ENCODE measurements at regions of chr5 and their contacts with region 1.

Region 1: GRCh38 chr5:150441813-150442698 is 7.5 kb downstream of the RPS14 start:
- DNase-seq: no peak
- ATAC-seq: no peak
- H3K4me3 Mint-ChIP-seq: no peak overlapping the region
- H3K27ac Mint-ChIP-seq: peak overlapping the region; percentile 13
- H3K4me1 Mint-ChIP-seq: peaks cover 16% of the 10 kb centered on the region
- H3K27me3 Mint-ChIP-seq: no peaks in the 10 kb centered on the region
- CTCF ChIP-seq: no peak

Region 2: DNA sequence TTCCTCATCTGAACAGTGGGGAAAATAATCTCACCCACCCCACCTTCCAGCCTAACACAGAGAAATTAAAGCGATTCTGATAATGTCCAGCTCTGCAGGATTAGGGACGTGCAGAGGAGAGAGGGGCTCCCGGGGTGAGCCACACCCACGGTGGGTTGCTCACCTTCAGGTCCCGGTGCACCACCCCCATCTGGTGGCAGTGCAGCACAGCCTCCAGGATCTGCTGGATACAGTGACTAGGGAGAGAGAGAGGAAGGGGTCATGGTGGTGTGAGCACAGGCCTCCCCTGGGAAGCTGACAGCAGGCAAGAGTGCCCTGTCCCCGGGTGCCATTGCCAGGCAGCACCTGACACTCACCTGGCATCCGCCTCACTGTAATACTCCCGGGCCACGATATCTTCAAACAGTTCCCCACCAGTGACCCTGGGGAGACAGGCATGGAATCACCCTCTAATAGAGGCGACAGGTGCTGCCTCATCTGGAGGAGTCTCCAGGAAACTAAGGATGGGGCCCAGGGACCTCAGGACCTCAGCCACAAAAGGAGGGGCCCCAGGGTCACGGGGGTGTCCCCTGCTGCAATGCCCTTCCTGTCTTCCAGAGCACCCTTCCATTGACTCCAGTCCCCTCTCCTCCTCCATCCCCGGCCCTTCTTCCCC is 185.5 kb before region 1 on chr5:
- CTCF ChIA-PET with region 1: no interaction called
- POLR2A ChIA-PET with region 1: no interaction called
- intact Hi-C with region 1: no loop called
- DNase-seq: no peak
- ATAC-seq: no peak
- H3K4me3 Mint-ChIP-seq: no peak overlapping the region
- H3K27ac Mint-ChIP-seq: no peak overlapping the region
- H3K4me1 Mint-ChIP-seq: no peaks in the 10 kb centered on the region
- H3K27me3 Mint-ChIP-seq: no peaks in the 10 kb centered on the region
- CTCF ChIP-seq: no peak

Region 3: GRCh38 chr5:150409638-150410523 is 32.2 kb before region 1 on chr5:
- CTCF ChIA-PET with region 1: interaction called, 3 read pairs
- POLR2A ChIA-PET with region 1: interaction called, 11 read pairs
- intact Hi-C with region 1: no loop called
- DNase-seq: peak; percentile 55
- ATAC-seq: no peak
- H3K4me3 Mint-ChIP-seq: peak overlapping the region; percentile 97
- H3K27ac Mint-ChIP-seq: peak overlapping the region; percentile 99
- H3K4me1 Mint-ChIP-seq: peaks cover 39% of the 10 kb centered on the region
- H3K27me3 Mint-ChIP-seq: no peaks in the 10 kb centered on the region
- CTCF ChIP-seq: no peak

Region 4: DNA sequence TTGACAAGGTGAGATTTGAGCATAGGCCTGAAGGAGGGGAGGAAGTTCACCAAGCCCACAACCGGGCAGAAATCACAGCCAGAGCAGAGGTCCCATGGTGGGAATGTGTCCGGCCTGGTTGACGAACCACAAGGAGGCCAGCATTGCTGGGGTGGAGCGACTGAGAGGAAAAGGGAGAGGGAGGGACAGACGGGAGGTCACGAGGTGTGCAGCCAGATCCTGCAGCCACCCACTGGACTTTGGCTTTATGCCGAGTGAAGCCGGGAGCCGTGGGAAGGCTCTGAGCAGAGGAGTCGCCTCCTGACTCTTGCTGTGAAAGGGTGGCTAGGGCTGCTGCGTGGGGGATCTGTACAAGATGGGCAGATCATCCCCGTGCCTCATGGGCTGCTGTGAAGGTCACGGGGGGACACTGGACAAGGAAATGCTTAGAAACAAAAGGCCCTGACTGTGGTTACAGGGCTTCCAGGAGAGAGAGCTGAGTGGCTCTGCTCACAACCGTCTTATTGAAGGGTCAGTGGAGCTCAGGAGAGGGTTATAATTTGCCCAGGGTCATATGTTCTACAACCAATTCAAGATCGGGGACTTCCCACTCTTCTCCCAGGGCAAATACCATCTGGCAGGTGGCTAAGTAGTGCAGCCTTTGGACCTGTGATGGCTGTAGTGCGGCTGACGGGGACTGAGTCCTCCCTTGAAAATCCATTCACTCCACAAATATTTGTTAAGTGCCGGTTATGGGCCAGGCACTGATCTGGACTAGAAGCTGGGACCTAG is 13.8 kb before region 1 on chr5:
- CTCF ChIA-PET with region 1: interaction called, 8 read pairs
- POLR2A ChIA-PET with region 1: interaction called, 23 read pairs
- intact Hi-C with region 1: no loop called
- DNase-seq: no peak
- ATAC-seq: no peak
- H3K4me3 Mint-ChIP-seq: no peak overlapping the region
- H3K27ac Mint-ChIP-seq: no peak overlapping the region
- H3K4me1 Mint-ChIP-seq: no peaks in the 10 kb centered on the region
- H3K27me3 Mint-ChIP-seq: no peaks in the 10 kb centered on the region
- CTCF ChIP-seq: no peak

Measured in activated CD8-positive, alpha-beta T cell treated with anti-CD3 and anti-CD28 coated beads for 36 hours (primary cell).